CD4-positive, alpha-beta memory T cell (primary cell): ENCODE measurements at regions of chr10 and their contacts with region 1.

Region 1: GRCh38 chr10:28628184-28628893 is 49.0 kb upstream of the BAMBI start:
- DNase-seq: peak; percentile 37 to 52 (median 47)
- H3K4me3 ChIP-seq: no peak overlapping the region
- H3K4me3 Mint-ChIP-seq: peak overlapping the region in 1 of 8 donors; percentile 16
- H3K27ac ChIP-seq: no peak overlapping the region
- H3K27ac Mint-ChIP-seq: no peak overlapping the region
- H3K4me1 ChIP-seq: peaks cover 3% of the 10 kb centered on the region
- H3K4me1 Mint-ChIP-seq: peaks cover 8 to 24% (median 13%) of the 10 kb centered on the region in 4 donors
- H3K27me3 ChIP-seq: peaks cover 5% of the 10 kb centered on the region
- H3K27me3 Mint-ChIP-seq: peaks cover 11 to 20% of the 10 kb centered on the region in 2 donors

Region 2: GRCh38 chr10:29304264-29305030 is 676.1 kb after region 1 on chr10:
- CTCF ChIA-PET with region 1: no interaction called
- POLR2A ChIA-PET with region 1: no interaction called
- intact Hi-C with region 1: loop called (anchors 1 kb)
- DNase-seq: peak in 4 of 5 donors; percentile 6 to 28 (median 16)
- H3K4me3 ChIP-seq: no peak overlapping the region
- H3K4me3 Mint-ChIP-seq: no peak overlapping the region
- H3K27ac ChIP-seq: no peak overlapping the region
- H3K27ac Mint-ChIP-seq: no peak overlapping the region
- H3K4me1 ChIP-seq: no peaks in the 10 kb centered on the region
- H3K4me1 Mint-ChIP-seq: peaks cover 0 to 5% (median 1%) of the 10 kb centered on the region in 4 donors
- H3K27me3 ChIP-seq: no peaks in the 10 kb centered on the region
- H3K27me3 Mint-ChIP-seq: peaks cover 23 to 25% of the 10 kb centered on the region in 2 donors